ENCODE measurements at regions of chr11 and their contacts with region 1.

Region 1: GRCh38 chr11:74492974-74493790 is at the start of gene LIPT2:
- DNase-seq: peak; percentile 79 to 99 (median 95)

Region 2: GRCh38 chr11:74592441-74593362 is 99.5 kb after region 1 on chr11 and contains the start of gene POLD3:
- intact Hi-C with region 1: loop called (anchors 2 kb)
- DNase-seq: peak; percentile 93 to 99 (median 98)

Measured in posterior cingulate gyrus (tissue), 11 donors.